Activated T-helper 2 cell treated with anti-CD3 and anti-CD28 coated beads, Interferon-gamma antibody, Interleukin-2, Interleukin-4, amounts not matched to agents 10 μg/mL and 5 μg/mL and 100 μg/mL, durations not matched to agents 14 hours and 24 hours and 36 hours (primary cell): ENCODE measurements at regions of chr3 and their contacts with region 1.

Region 1: DNA sequence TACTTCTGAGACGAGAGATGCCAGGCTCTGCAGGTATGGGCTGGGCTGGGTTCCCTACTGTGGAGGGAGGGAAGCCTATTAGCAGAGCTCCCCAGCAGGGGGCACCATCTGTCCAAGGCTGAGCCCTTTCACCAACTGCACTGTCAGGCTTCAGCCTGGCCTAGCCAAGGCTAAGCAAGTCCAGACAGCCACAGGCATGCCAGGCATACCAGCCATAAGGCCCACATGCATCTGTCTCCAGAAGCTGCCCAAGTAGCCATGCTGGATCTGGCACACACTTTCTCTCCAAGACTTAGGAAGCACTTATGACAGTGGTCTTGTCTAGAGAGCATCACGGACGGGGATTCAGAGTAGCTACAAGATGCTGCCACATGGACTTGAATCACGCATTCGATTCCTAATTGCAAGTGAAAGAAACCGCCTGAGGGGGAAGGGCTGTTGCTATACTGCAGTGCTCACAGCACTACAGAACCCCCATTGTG is 28.3 kb downstream of the RUVBL1 start:
- DNase-seq: peak; percentile 62
- H3K4me3 Mint-ChIP-seq: no peak overlapping the region
- H3K27ac Mint-ChIP-seq: no peak overlapping the region
- H3K4me1 Mint-ChIP-seq: peaks cover 7% of the 10 kb centered on the region
- H3K27me3 Mint-ChIP-seq: no peaks in the 10 kb centered on the region

Region 2: GRCh38 chr3:128133273-128134084 is 38.2 kb after region 1 on chr3:
- intact Hi-C with region 1: loop called (anchors 1 kb)
- DNase-seq: no peak
- H3K4me3 Mint-ChIP-seq: no peak overlapping the region
- H3K27ac Mint-ChIP-seq: no peak overlapping the region
- H3K4me1 Mint-ChIP-seq: no peaks in the 10 kb centered on the region
- H3K27me3 Mint-ChIP-seq: peaks cover 36% of the 10 kb centered on the region

Region 3: DNA sequence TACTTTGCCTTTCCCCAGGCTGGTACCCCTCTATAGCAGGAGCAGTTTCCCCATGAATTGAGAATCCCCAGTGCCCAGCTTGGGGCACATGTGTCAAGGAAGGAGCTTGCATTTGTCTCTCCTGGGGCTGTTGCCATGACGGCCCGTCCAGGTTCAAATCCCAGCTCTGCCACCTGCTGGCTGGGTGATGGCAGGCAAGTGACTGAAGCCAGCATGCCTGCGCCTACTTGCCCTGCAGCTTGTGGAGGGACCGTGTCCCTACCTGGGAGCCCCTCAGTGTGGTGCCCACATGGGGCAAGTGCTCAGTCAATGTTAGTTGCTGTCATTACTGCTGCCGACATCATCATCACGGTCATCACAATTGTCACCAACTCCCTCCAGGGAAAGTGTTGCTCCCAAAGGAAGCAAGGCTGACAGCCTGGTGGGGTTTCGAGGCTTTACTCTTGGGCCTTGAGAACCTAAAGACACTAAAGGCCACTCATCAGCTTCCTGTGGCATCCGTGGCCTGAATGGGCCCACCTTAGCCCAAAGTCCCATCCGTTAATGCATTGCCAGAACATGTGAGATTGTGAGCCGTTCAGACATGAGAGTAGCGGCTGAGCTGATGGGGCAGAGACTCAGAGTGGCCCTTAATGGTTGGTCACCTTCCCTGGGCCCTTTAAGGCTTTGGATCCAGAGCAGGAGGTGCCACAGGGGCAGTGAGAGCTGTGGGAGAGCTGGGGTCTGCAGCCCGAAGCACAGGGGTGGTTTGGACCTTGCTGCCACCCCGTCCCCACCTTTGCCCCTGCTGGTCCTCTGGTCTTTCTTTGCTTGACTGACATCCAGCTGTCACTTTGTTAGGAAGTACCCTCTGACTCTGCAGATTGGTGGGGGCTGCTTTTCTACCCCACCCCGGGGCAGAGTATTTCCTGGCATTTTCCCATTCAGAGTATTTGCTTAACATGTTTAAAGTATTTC is 227.1 kb after region 1 on chr3:
- intact Hi-C with region 1: loop called (anchors 5 kb)
- DNase-seq: peak; percentile 32
- H3K4me3 Mint-ChIP-seq: no peak overlapping the region
- H3K27ac Mint-ChIP-seq: no peak overlapping the region
- H3K4me1 Mint-ChIP-seq: peaks cover 19% of the 10 kb centered on the region
- H3K27me3 Mint-ChIP-seq: no peaks in the 10 kb centered on the region

Region 4: GRCh38 chr3:129120254-129121004 is 1025.2 kb after region 1 on chr3:
- intact Hi-C with region 1: no loop called
- DNase-seq: peak; percentile 93
- H3K4me3 Mint-ChIP-seq: peak overlapping the region; percentile 94
- H3K27ac Mint-ChIP-seq: peak overlapping the region; percentile 97
- H3K4me1 Mint-ChIP-seq: peaks cover 52% of the 10 kb centered on the region
- H3K27me3 Mint-ChIP-seq: no peaks in the 10 kb centered on the region